ENCODE measurements at regions of chr3 and their contacts with region 1.

Region 1: DNA sequence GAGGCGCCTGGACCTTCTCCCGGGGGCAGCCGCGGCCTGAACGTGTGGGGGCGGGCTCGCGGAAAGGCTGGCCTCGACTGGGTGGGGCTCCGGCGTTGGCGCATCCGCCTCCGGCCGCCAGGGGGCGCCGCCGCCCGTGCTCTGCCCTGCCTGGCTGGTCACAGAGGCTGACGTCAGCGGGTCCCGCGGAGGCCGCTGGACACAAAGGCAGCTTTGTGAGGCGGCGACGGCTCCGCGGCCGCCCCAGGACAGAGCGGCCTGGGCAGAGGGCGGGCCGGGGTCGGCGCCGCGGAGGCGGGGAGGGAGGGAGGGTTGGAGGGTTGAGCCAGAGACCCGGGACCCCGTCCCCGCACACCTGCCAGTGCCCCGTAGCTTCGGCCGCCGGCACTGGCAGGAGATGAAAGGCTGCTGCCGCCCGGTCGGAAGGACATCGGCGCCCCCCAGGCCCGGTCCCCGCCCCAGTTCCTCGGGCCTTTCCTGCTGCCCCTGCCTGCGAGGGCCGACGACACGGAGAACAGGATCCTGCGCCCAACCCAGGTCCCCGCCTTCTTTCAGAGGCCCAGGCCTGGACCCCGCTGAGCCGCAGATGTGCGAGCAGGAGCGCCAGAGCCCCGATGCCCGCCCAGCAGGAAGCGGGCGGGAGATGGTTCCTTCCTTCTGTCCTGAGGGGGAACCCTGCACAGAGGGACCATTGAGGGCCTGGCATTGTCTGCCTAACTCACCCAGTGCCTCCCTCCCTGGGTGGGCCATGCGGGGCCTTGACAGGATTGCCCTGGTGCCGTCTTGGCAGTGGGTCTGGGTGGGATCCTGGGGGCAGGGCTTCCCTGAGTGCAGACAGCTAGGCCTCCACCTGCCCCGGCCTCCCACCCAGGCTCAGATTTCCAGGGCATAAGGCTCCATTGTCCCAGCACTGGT is 8.7 kb upstream of the SEMA3B start:
- DNase-seq: peak in 1 of 2 experiments; percentile 97
- H3K4me3 ChIP-seq: peak overlapping the region; percentile 11 to 60 (median 34)
- H3K27ac ChIP-seq: peak overlapping the region; percentile 89
- H3K4me1 ChIP-seq: peaks cover 0 to 27% (median 22%) of the 10 kb centered on the region in 4 experiments; a peak in 6 of 7 replicates
- H3K27me3 ChIP-seq: no peaks in the 10 kb centered on the region
- CTCF ChIP-seq: peak in 2 of 3 experiments; percentile 93 to 96; a peak in 3 of 4 replicates
- EP300 ChIP-seq: peak in 1 of 2 experiments; percentile 9; a peak in 1 of 3 replicates
- POLR2A ChIP-seq: peak in 1 of 2 experiments; percentile 84; a peak in 2 of 3 replicates
- RAD21 ChIP-seq: peak; percentile 79 to 90

Region 2: DNA sequence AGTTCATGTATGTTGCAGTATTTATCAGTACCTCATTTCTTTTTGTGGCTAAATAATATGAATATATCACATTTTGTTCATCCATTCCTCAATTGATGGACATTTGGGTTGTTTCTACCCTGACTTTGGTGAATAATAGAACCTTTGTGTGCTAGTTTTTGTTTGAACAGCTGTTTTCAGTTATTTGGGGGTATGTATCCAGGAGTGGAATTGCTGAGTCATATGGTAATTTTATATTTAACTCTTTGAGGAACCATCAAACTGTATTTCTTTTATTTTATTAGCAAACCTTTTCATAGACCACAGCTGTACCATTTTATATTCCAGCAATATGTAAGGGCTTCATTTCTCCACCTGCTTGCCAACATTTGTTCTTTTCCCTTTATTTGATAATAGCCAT is 209.9 kb before region 1 on chr3:
- CTCF ChIA-PET with region 1: no interaction called
- POLR2A ChIA-PET with region 1: no interaction called
- DNase-seq: no peak
- H3K4me3 ChIP-seq: no peak overlapping the region
- H3K27ac ChIP-seq: no peak overlapping the region
- H3K4me1 ChIP-seq: no peaks in the 10 kb centered on the region
- H3K27me3 ChIP-seq: no peaks in the 10 kb centered on the region
- CTCF ChIP-seq: no peak
- EP300 ChIP-seq: no peak
- POLR2A ChIP-seq: no peak
- RAD21 ChIP-seq: no peak

Region 3: GRCh38 chr3:50235716-50236496 is 24.4 kb before region 1 on chr3 and contains the start of gene GNAI2:
- CTCF ChIA-PET with region 1: interaction called, 2,149 read pairs
- POLR2A ChIA-PET with region 1: interaction called, 19 read pairs
- DNase-seq: peak; percentile 95 to 96
- H3K4me3 ChIP-seq: peak within 1 kb of the TSS; percentile 86 to 93 (median 90)
- H3K27ac ChIP-seq: 0 out of 2 replicates have a peak within 1 kb of the TSS, but pooled peaks have one; percentile 61
- H3K4me1 ChIP-seq: peaks cover 6 to 39% (median 36%) of the 10 kb centered on the region in 4 experiments
- H3K27me3 ChIP-seq: no peaks in the 10 kb centered on the region; a peak in 1 of 7 replicates
- CTCF ChIP-seq: no peak
- EP300 ChIP-seq: no peak
- POLR2A ChIP-seq: peak in 1 of 2 experiments; percentile 77; a peak in 2 of 3 replicates
- RAD21 ChIP-seq: no peak
- total RNA-seq, gene GNAI2: 168 and 169 TPM in 2 replicates

Region 4: DNA sequence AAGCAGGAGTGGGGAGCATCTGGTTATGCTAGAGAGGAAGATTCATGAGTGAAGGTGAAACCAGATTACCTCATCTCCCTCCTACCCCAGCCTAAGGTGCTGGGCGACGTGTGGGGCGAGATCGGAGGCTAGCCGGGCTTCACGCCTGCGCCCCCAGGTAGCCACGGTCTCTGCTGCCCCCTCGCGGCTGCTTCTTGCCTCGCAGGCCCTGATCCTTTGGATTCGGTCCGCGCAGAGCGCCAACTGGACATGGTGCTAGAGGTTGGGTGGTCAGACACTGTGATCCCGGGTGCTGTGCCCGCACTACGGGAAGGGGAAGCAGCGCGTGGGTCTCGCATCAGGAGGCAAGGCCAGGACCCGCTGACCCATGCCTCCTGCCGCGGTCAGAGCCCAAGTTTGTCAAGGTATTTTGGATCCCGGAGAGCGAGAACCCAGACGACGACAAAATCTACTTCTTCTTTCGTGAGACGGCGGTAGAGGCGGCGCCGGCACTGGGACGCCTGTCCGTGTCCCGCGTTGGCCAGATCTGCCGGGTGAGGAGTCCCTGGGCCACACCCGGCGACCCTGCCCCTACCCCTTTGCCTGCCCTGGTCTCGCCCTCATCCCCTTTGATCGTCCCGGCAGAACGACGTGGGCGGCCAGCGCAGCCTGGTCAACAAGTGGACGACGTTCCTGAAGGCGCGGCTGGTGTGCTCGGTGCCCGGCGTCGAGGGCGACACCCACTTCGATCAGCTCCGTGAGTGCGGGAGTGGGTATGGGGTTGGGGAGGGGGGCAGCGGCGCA is 12.8 kb after region 1 on chr3:
- CTCF ChIA-PET with region 1: interaction called, 149 read pairs
- POLR2A ChIA-PET with region 1: interaction called, 35 read pairs
- DNase-seq: peak in 1 of 2 experiments; percentile 100
- H3K4me3 ChIP-seq: peak overlapping the region in 1 of 4 experiments; percentile 46; a peak in 1 of 8 replicates
- H3K27ac ChIP-seq: no peak overlapping the region
- H3K4me1 ChIP-seq: peaks cover 0 to 20% (median 19%) of the 10 kb centered on the region in 4 experiments; a peak in 6 of 7 replicates
- H3K27me3 ChIP-seq: peaks cover 27 to 50% (median 42%) of the 10 kb centered on the region in 4 experiments
- CTCF ChIP-seq: peak in 2 of 3 experiments; percentile 98 to 99; a peak in 3 of 4 replicates
- EP300 ChIP-seq: no peak
- POLR2A ChIP-seq: no peak
- RAD21 ChIP-seq: peak; percentile 99

Region 5: DNA sequence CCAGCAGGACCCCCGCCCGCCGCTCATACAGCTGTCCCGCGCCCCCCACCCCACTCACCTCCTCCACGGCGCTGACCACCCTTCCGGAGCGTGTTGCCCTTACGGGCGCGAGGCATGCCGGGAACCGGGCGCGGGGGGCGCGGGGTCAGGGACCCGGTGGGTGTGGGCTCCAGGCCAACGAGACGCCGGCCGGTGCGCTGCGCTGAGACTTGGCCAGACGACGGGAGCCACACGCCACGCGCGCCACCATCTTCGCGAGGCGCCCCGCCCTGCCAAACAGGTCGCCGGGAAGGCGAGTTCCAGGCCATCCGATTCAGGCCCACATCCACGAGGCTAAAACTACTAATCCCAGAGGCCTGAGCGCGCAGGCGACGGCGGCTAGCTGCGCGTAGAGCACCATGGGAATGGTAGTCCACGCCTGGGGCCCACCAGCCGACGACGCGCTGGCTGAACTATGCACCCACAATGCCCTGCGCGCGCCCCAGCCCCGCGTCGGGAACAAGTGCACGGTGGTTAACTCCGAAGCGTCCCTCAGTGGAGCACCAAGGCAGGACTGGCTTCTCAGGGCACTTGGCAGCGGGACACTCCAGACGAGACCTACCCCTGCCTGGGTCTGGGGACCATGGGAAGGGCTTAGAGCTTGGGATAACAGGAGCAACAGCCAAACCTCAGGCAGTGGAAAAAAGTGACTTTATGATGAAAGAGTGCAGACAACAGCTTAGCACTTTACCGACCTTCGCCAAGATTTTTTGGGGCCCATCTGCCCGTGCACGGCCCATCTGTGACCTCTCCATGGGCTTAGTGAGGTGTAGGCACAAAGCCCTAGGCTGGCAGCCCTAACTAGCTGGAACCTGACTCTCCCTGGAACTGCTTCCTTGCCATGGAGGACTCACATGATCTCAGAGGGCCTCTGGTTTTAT is 32.1 kb after region 1 on chr3 and contains the start of gene IFRD2:
- CTCF ChIA-PET with region 1: interaction called, 13 read pairs
- POLR2A ChIA-PET with region 1: interaction called, 5 read pairs
- DNase-seq: peak; percentile 91 to 94
- H3K4me3 ChIP-seq: peak within 1 kb of the TSS; percentile 62 to 95 (median 94)
- H3K27ac ChIP-seq: peak within 1 kb of the TSS; percentile 37; the same call in 1 of the 2 replicates
- H3K4me1 ChIP-seq: peaks cover 0 to 7% (median 5%) of the 10 kb centered on the region in 4 experiments; a peak in 4 of 7 replicates
- H3K27me3 ChIP-seq: no peaks in the 10 kb centered on the region; a peak in 1 of 7 replicates
- CTCF ChIP-seq: peak in 1 of 3 experiments; percentile 1; a peak in 1 of 4 replicates
- EP300 ChIP-seq: no peak
- POLR2A ChIP-seq: peak in 1 of 2 experiments; percentile 73; a peak in 2 of 3 replicates
- RAD21 ChIP-seq: no peak; a peak in 1 of 4 replicates
- total RNA-seq, gene IFRD2: 88.8 and 97.8 TPM in 2 replicates